IMR-90 (cell line): ENCODE measurements at regions of chr1 and their contacts with region 1.

Region 1: GRCh38 chr1:200139661-200140250 is 112.2 kb downstream of the NR5A2 start:
- DNase-seq: peak; percentile 68
- ATAC-seq: peak; percentile 91
- H3K4me3 ChIP-seq: no peak overlapping the region
- H3K27ac ChIP-seq: no peak overlapping the region
- H3K4me1 ChIP-seq: no peaks in the 10 kb centered on the region
- H3K27me3 ChIP-seq: no peaks in the 10 kb centered on the region
- CTCF ChIP-seq: peak; percentile 66
- POLR2A ChIP-seq: no peak
- RAD21 ChIP-seq: peak; percentile 76

Region 2: GRCh38 chr1:200184196-200184595 is 44.4 kb after region 1 on chr1:
- CTCF ChIA-PET with region 1: no interaction called
- POLR2A ChIA-PET with region 1: no interaction called
- dilution Hi-C with region 1: no loop called
- in situ Hi-C with region 1: no loop called
- intact Hi-C with region 1: no loop called
- DNase-seq: peak; percentile 54
- ATAC-seq: no peak
- H3K4me3 ChIP-seq: no peak overlapping the region
- H3K27ac ChIP-seq: no peak overlapping the region
- H3K4me1 ChIP-seq: peaks cover 16% of the 10 kb centered on the region
- H3K27me3 ChIP-seq: no peaks in the 10 kb centered on the region
- CTCF ChIP-seq: no peak
- POLR2A ChIP-seq: no peak
- RAD21 ChIP-seq: no peak

Region 3: DNA sequence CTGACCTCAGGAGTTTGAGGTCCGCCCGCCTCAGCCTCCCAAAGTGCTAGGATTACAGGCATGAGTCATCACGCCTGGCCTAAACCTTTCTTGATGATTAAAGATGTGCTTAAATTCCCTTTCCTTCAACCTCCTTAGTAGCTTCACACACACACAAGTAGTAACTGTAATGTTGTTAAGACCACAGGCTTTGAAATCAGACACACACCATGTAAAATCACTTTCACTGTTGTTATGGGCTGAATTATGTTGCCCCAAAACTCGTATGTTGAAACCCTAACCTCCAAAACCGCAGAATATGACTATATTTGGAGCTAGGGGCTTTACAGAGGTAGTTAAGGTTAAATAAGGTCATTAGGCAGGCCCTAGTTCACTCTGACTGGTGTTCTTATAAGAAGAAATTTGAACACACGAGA is 68.0 kb after region 1 on chr1:
- CTCF ChIA-PET with region 1: no interaction called
- POLR2A ChIA-PET with region 1: no interaction called
- dilution Hi-C with region 1: no loop called
- in situ Hi-C with region 1: no loop called
- intact Hi-C with region 1: no loop called
- DNase-seq: peak; percentile 76
- ATAC-seq: peak; percentile 15
- H3K4me3 ChIP-seq: no peak overlapping the region
- H3K27ac ChIP-seq: no peak overlapping the region
- H3K4me1 ChIP-seq: peaks cover 9% of the 10 kb centered on the region; the same call in 1 of the 2 replicates
- H3K27me3 ChIP-seq: no peaks in the 10 kb centered on the region
- CTCF ChIP-seq: no peak
- POLR2A ChIP-seq: no peak
- RAD21 ChIP-seq: no peak

Region 4: GRCh38 chr1:200279810-200280411 is 140.2 kb after region 1 on chr1:
- CTCF ChIA-PET with region 1: interaction called, 4 read pairs
- POLR2A ChIA-PET with region 1: no interaction called
- dilution Hi-C with region 1: no loop called
- in situ Hi-C with region 1: no loop called
- intact Hi-C with region 1: loop called (anchors 10 kb)
- DNase-seq: peak; percentile 60
- ATAC-seq: peak; percentile 88
- H3K4me3 ChIP-seq: no peak overlapping the region
- H3K27ac ChIP-seq: no peak overlapping the region
- H3K4me1 ChIP-seq: peaks cover 3% of the 10 kb centered on the region
- H3K27me3 ChIP-seq: no peaks in the 10 kb centered on the region
- CTCF ChIP-seq: peak; percentile 73
- POLR2A ChIP-seq: 0 out of 2 replicates have a peak, but pooled peaks have one; percentile 30
- RAD21 ChIP-seq: peak; percentile 80

Region 5: GRCh38 chr1:200302192-200302920 is 162.6 kb after region 1 on chr1:
- CTCF ChIA-PET with region 1: no interaction called
- POLR2A ChIA-PET with region 1: no interaction called
- dilution Hi-C with region 1: no loop called
- in situ Hi-C with region 1: no loop called
- intact Hi-C with region 1: loop called (anchors 2 kb)
- DNase-seq: peak; percentile 47
- ATAC-seq: peak; percentile 83
- H3K4me3 ChIP-seq: peak overlapping the region; percentile 52
- H3K27ac ChIP-seq: no peak overlapping the region
- H3K4me1 ChIP-seq: peaks cover 4% of the 10 kb centered on the region
- H3K27me3 ChIP-seq: no peaks in the 10 kb centered on the region
- CTCF ChIP-seq: 0 out of 2 replicates have a peak, but pooled peaks have one; percentile 6
- POLR2A ChIP-seq: no peak
- RAD21 ChIP-seq: no peak

Region 6: GRCh38 chr1:200409761-200410565 is 270.2 kb after region 1 on chr1 and contains the start of gene ZNF281:
- CTCF ChIA-PET with region 1: no interaction called
- POLR2A ChIA-PET with region 1: no interaction called
- dilution Hi-C with region 1: no loop called
- in situ Hi-C with region 1: no loop called
- intact Hi-C with region 1: loop called (anchors 10 kb)
- DNase-seq: peak; percentile 90
- ATAC-seq: peak; percentile 98
- H3K4me3 ChIP-seq: peak within 1 kb of the TSS; percentile 86
- H3K27ac ChIP-seq: peak within 1 kb of the TSS; percentile 98
- H3K4me1 ChIP-seq: peaks cover 13% of the 10 kb centered on the region
- H3K27me3 ChIP-seq: no peaks in the 10 kb centered on the region
- CTCF ChIP-seq: no peak
- POLR2A ChIP-seq: peak; percentile 80
- RAD21 ChIP-seq: no peak
- total RNA-seq, gene ZNF281: 37.5 and 38.0 TPM in 2 replicates

Region 7: DNA sequence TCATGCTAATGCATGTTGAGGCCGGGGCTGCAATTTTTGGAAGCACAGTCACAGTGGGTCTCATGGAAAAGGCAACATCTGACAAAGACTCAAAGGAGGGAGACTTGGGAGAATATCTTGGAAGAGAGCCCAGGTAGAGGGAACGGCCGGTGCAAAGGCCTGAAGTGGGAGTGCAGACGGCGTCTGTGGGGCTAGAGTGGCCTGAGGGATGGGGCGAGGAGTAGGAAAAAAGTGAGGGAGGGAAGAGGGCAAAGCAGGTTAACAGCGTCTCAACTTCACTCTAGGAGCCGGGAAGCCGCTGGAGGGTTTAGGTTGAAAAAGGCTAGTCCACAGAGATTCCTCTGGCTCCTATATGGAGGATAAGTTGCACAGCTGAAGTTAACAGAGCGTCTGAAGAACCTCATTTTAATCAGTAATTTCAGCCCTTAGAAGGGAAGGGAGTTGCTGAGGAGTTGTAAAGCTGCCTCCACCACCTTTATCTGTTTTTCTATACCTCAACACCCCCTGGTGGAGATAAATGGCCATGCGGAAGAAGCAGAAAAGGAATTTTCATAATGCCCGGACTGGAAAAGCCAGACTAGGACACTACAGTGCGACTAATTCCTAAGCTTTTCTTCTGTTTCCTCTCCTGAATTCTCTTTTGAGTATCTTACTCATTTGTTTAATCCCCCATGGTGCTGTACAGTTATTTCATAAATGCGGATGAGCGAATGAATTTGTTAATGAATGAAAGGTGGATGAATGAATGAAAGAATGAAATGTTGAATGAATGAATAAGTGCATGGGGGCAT is 348.8 kb after region 1 on chr1:
- CTCF ChIA-PET with region 1: interaction called, 3 read pairs
- POLR2A ChIA-PET with region 1: no interaction called
- dilution Hi-C with region 1: no loop called
- in situ Hi-C with region 1: loop called (anchors 5 kb)
- intact Hi-C with region 1: loop called (anchors 1 kb)
- DNase-seq: peak; percentile 85
- ATAC-seq: peak; percentile 93
- H3K4me3 ChIP-seq: no peak overlapping the region
- H3K27ac ChIP-seq: peak overlapping the region; percentile 13
- H3K4me1 ChIP-seq: peaks cover 10% of the 10 kb centered on the region
- H3K27me3 ChIP-seq: no peaks in the 10 kb centered on the region
- CTCF ChIP-seq: peak; percentile 93
- POLR2A ChIP-seq: peak; percentile 53; the same call in 1 of the 2 replicates
- RAD21 ChIP-seq: peak; percentile 95

Region 8: DNA sequence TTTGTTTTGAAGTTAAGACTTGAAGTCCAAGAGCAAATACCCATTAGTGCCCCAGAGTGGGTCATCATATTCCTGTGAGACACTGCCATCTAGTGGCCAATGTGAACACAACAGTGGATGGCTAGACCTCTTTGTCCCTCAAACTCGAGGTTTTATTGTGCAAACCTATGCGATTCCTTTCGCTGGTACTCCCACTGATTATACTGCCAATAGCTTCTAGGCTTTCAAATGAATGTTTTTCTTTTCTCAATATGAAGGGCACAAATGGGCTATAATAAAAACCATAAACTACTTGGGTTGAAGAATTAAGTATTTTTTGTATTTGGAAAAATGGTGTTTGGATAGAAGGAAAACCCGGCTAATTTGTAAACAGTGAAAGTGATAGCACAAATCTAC is 370.5 kb after region 1 on chr1:
- CTCF ChIA-PET with region 1: no interaction called
- POLR2A ChIA-PET with region 1: no interaction called
- dilution Hi-C with region 1: no loop called
- in situ Hi-C with region 1: no loop called
- intact Hi-C with region 1: loop called (anchors 1 kb)
- DNase-seq: peak; percentile 88
- ATAC-seq: peak; percentile 90
- H3K4me3 ChIP-seq: no peak overlapping the region
- H3K27ac ChIP-seq: no peak overlapping the region
- H3K4me1 ChIP-seq: no peaks in the 10 kb centered on the region
- H3K27me3 ChIP-seq: no peaks in the 10 kb centered on the region
- CTCF ChIP-seq: peak; percentile 91
- POLR2A ChIP-seq: peak; percentile 56; the same call in 1 of the 2 replicates
- RAD21 ChIP-seq: peak; percentile 94